Mammary epithelial cell (primary cell): ENCODE measurements at regions of chr4 and their contacts with region 1.

Region 1: GRCh38 chr4:13988353-13989305 is 361.1 kb upstream of the BOD1L1 start:
- DNase-seq: peak; percentile 94
- H3K4me3 ChIP-seq: no peak overlapping the region
- H3K27ac ChIP-seq: peak overlapping the region; percentile 79
- H3K4me1 ChIP-seq: peaks cover 36% of the 10 kb centered on the region
- H3K27me3 ChIP-seq: peaks cover 3% of the 10 kb centered on the region
- CTCF ChIP-seq: no peak

Region 2: GRCh38 chr4:14254252-14254651 is 265.6 kb after region 1 on chr4:
- CTCF ChIA-PET with region 1: no interaction called
- dilution Hi-C with region 1: no loop called
- in situ Hi-C with region 1: no loop called
- intact Hi-C with region 1: loop called (anchors 1 kb)
- DNase-seq: peak; percentile 46
- H3K4me3 ChIP-seq: no peak overlapping the region
- H3K27ac ChIP-seq: no peak overlapping the region
- H3K4me1 ChIP-seq: no peaks in the 10 kb centered on the region
- H3K27me3 ChIP-seq: no peaks in the 10 kb centered on the region
- CTCF ChIP-seq: peak; percentile 78 to 93